ENCODE measurements at regions of chr11 and their contacts with region 1.

Region 1: GRCh38 chr11:123110356-123110755 is 48.4 kb upstream of the HSPA8 start:
- DNase-seq: no peak
- H3K4me3 Mint-ChIP-seq: no peak overlapping the region
- H3K27ac Mint-ChIP-seq: no peak overlapping the region
- H3K4me1 Mint-ChIP-seq: peaks cover 4% of the 10 kb centered on the region
- H3K27me3 Mint-ChIP-seq: no peaks in the 10 kb centered on the region

Region 2: DNA sequence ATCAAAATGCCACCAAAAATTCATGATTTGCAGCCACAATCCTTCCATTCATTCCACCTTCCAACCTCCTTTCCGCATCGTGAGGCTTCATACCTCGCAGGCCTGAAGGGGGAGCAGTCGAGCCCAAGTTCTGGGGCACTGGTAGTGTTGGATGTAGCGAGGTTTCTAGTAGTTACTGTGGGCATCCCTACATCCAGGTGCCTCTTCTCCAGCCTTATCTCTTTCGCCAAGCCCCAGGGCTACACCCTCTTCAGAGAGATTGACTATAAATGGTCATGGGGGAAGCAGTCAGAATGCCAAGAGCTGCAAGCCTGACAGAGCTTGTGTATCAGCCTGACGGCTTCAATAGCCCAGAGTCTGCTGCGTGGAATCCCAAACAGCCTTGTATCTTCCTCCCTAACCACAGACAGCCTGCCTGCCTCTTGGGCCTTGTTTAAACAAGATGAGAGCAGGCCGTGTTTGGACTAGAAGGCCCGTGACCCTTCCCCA is 55.8 kb after region 1 on chr11:
- CTCF ChIA-PET with region 1: interaction called, 3 read pairs
- POLR2A ChIA-PET with region 1: no interaction called
- intact Hi-C with region 1: loop called (anchors 10 kb)
- DNase-seq: peak; percentile 38
- H3K4me3 Mint-ChIP-seq: no peak overlapping the region
- H3K27ac Mint-ChIP-seq: no peak overlapping the region
- H3K4me1 Mint-ChIP-seq: no peaks in the 10 kb centered on the region
- H3K27me3 Mint-ChIP-seq: no peaks in the 10 kb centered on the region

Region 3: GRCh38 chr11:123235117-123235655 is 124.8 kb after region 1 on chr11:
- CTCF ChIA-PET with region 1: interaction called, 15 read pairs
- POLR2A ChIA-PET with region 1: no interaction called
- intact Hi-C with region 1: no loop called
- DNase-seq: peak; percentile 58
- H3K4me3 Mint-ChIP-seq: no peak overlapping the region
- H3K27ac Mint-ChIP-seq: no peak overlapping the region
- H3K4me1 Mint-ChIP-seq: peaks cover 15% of the 10 kb centered on the region
- H3K27me3 Mint-ChIP-seq: no peaks in the 10 kb centered on the region

Region 4: DNA sequence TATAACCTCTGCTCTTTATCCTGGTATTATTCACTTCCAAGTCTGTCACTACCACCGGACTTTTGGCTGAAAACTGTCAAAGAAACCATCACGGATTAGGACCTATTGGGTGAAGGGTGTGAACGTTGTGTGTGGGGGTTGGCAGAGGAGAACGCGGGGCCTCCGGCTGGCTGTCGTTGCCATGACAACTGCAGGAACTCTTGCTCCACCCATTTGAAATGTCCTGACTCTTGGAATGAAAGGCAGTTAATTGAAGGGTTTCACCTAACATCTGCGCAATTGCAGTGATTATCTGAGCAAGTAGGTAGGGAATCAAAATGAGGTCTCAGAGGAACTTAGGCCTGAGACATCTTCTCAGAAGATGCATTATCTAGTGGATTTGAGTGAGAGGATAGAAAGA is 145.6 kb after region 1 on chr11:
- CTCF ChIA-PET with region 1: interaction called, 36 read pairs
- POLR2A ChIA-PET with region 1: no interaction called
- intact Hi-C with region 1: no loop called
- DNase-seq: no peak
- H3K4me3 Mint-ChIP-seq: no peak overlapping the region
- H3K27ac Mint-ChIP-seq: no peak overlapping the region
- H3K4me1 Mint-ChIP-seq: no peaks in the 10 kb centered on the region
- H3K27me3 Mint-ChIP-seq: peaks cover 1% of the 10 kb centered on the region

Region 5: GRCh38 chr11:123261345-123262106 is 151.2 kb after region 1 on chr11:
- CTCF ChIA-PET with region 1: interaction called, 36 read pairs
- POLR2A ChIA-PET with region 1: no interaction called
- intact Hi-C with region 1: no loop called
- DNase-seq: peak; percentile 82
- H3K4me3 Mint-ChIP-seq: no peak overlapping the region
- H3K27ac Mint-ChIP-seq: no peak overlapping the region
- H3K4me1 Mint-ChIP-seq: no peaks in the 10 kb centered on the region
- H3K27me3 Mint-ChIP-seq: peaks cover 13% of the 10 kb centered on the region

Region 6: DNA sequence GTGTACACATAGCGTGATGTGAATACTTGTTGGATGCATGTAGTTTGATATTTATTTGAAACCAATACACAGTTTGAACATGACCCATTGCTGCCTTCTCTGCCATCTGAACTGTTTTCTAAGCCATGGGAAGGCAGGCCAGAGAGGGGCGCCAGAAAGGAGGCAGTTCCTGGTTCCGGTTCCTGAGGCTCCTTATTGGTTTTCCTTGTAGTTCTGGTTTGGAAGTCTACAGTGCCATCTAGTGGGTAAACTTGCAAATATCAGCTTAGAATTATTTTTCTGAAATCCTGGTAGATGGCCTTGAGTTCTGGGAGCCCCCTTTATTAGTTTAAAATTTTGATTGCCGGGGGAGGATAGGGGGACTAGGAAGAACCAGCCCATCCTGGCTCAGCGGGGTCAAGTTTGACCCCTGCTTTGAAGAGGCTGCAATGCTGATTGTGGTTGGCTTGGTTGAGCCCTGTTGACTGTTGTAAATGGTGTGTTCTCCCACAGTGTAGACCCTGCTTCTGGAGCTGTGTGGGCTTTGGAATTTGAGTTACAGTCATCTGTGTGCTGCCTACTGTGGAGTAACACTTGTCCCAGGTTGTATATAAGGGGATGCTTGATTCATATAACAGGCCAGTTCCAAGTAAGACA is 368.1 kb after region 1 on chr11:
- CTCF ChIA-PET with region 1: interaction called, 4 read pairs
- POLR2A ChIA-PET with region 1: no interaction called
- intact Hi-C with region 1: loop called (anchors 2 kb)
- DNase-seq: peak; percentile 38
- H3K4me3 Mint-ChIP-seq: peak overlapping the region; percentile 27
- H3K27ac Mint-ChIP-seq: peak overlapping the region; percentile 56
- H3K4me1 Mint-ChIP-seq: peaks cover 43% of the 10 kb centered on the region
- H3K27me3 Mint-ChIP-seq: no peaks in the 10 kb centered on the region